ENCODE measurements at regions of chr7 and their contacts with region 1.

Region 1: GRCh38 chr7:157827045-157827862 is 490.4 kb downstream of the DNAJB6 start:
- DNase-seq: peak; percentile 65
- H3K4me3 Mint-ChIP-seq: no peak overlapping the region
- H3K27ac Mint-ChIP-seq: peak overlapping the region; percentile 4
- H3K4me1 Mint-ChIP-seq: peaks cover 25% of the 10 kb centered on the region
- H3K27me3 Mint-ChIP-seq: no peaks in the 10 kb centered on the region

Region 2: DNA sequence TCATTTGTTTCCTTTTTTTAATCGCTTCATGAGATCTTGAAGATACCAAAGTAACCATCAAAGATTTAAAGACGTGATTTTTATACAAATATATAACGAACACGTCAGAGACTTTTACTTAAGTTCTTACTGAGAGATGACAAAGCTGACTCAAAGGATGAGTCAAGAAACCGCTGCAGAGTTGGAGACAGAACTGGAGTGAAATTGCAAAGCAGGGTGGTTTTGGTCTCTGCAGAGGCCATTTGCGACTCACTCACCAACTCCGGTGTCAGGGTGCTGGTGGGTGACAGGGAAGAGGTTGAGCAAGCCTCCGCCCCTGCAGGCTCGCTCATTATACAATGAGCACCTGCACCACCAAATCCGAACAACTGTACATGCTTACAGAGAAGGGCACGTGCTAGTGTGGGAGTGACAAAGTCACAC is 415.2 kb before region 1 on chr7:
- CTCF ChIA-PET with region 1: no interaction called
- POLR2A ChIA-PET with region 1: no interaction called
- intact Hi-C with region 1: loop called (anchors 1 kb)
- DNase-seq: peak; percentile 87
- H3K4me3 Mint-ChIP-seq: peak overlapping the region; percentile 44
- H3K27ac Mint-ChIP-seq: peak overlapping the region; percentile 85
- H3K4me1 Mint-ChIP-seq: peaks cover 22% of the 10 kb centered on the region
- H3K27me3 Mint-ChIP-seq: no peaks in the 10 kb centered on the region

Region 3: GRCh38 chr7:157851501-157852067 is 24.3 kb after region 1 on chr7:
- CTCF ChIA-PET with region 1: no interaction called
- POLR2A ChIA-PET with region 1: no interaction called
- intact Hi-C with region 1: loop called (anchors 2 kb)
- DNase-seq: peak; percentile 91
- H3K4me3 Mint-ChIP-seq: peak overlapping the region; percentile 69
- H3K27ac Mint-ChIP-seq: peak overlapping the region; percentile 87
- H3K4me1 Mint-ChIP-seq: peaks cover 10% of the 10 kb centered on the region
- H3K27me3 Mint-ChIP-seq: no peaks in the 10 kb centered on the region

Region 4: GRCh38 chr7:157875230-157876179 is 48.3 kb after region 1 on chr7:
- CTCF ChIA-PET with region 1: no interaction called
- POLR2A ChIA-PET with region 1: no interaction called
- intact Hi-C with region 1: loop called (anchors 5 kb)
- DNase-seq: peak; percentile 67
- H3K4me3 Mint-ChIP-seq: peak overlapping the region; percentile 69
- H3K27ac Mint-ChIP-seq: peak overlapping the region; percentile 18
- H3K4me1 Mint-ChIP-seq: peaks cover 17% of the 10 kb centered on the region
- H3K27me3 Mint-ChIP-seq: no peaks in the 10 kb centered on the region

Region 5: DNA sequence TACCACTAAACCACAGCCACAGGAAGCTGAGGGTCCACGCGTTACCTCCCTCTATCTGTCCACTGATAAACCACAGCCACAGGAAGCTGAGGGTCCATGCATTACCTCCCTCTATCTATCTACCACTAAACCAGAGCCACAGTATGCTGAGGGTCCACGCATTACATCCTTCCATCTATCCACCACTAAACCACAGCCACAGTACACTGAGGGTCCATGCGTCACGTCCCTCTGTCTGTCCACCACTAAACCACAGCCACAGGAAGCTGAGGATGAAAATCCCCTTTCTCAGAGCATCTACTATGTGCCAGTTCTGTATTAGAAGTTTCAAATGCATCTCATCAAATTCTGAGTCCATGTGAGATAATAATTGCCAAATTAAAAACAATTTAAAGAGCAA is 98.9 kb after region 1 on chr7:
- CTCF ChIA-PET with region 1: no interaction called
- POLR2A ChIA-PET with region 1: no interaction called
- intact Hi-C with region 1: no loop called
- DNase-seq: no peak
- H3K4me3 Mint-ChIP-seq: no peak overlapping the region
- H3K27ac Mint-ChIP-seq: no peak overlapping the region
- H3K4me1 Mint-ChIP-seq: peaks cover 7% of the 10 kb centered on the region
- H3K27me3 Mint-ChIP-seq: peaks cover 8% of the 10 kb centered on the region